Heart left ventricle (tissue), 16 donors: ENCODE measurements at regions of chr18 and their contacts with region 1.

Region 1: DNA sequence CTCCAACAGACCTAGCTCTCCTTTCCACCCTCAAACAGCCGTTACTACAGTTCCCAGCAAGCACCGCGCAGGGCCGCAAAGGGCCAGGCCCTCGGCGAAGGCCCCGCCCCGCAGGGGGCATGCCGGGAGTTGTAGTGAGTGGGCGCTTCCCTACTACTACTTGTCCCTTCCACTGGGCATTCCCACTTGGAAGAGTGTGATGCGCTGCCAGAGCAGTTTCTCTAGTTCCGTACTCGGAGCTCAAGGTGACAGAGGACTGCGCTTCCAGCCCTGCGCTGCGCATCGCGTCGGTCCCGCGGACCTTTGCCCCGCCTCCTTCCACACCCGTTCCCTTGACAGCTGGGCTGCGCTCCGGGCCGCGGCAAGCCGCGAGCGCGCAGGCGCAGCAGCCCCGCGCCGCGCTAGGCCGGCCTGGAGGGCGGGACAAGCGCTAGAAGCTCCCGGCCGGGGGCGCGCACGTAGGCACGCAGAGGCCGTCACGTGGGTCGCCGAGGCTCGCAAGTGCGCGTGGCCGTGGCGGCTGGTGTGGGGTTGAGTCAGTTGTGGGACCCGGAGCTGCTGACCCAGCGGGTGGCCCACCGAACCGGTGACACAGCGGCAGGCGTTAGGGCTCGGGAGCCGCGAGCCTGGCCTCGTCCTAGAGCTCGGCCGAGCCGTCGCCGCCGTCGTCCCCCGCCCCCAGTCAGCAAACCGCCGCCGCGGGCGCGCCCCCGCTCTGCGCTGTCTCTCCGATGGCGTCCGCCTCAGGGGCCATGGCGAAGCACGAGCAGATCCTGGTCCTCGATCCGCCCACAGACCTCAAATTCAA is at the start of gene VAPA:
- DNase-seq: peak; percentile 95 to 98 (median 96)
- ATAC-seq: peak; percentile 95 to 98 (median 96)
- H3K4me3 ChIP-seq: peak within 1 kb of the TSS; percentile 71 to 98 (median 94)
- H3K27ac ChIP-seq: peak within 1 kb of the TSS; percentile 99 to 100 (median 99)
- H3K4me1 ChIP-seq: peaks cover 0 to 41% (median 36%) of the 10 kb centered on the region in 12 donors
- H3K27me3 ChIP-seq: no peaks in the 10 kb centered on the region
- CTCF ChIP-seq: no peak
- POLR2A ChIP-seq: peak in 1 of 2 donors; percentile 87
- total RNA-seq, gene VAPA: 186 to 289 (median 219) TPM

Region 2: GRCh38 chr18:9488538-9488937 is 425.2 kb before region 1 on chr18:
- intact Hi-C with region 1: no loop called
- DNase-seq: no peak
- ATAC-seq: no peak
- H3K4me3 ChIP-seq: no peak overlapping the region
- H3K27ac ChIP-seq: no peak overlapping the region
- H3K4me1 ChIP-seq: peaks cover 0 to 34% (median 0%) of the 10 kb centered on the region in 12 donors
- H3K27me3 ChIP-seq: no peaks in the 10 kb centered on the region
- CTCF ChIP-seq: no peak
- POLR2A ChIP-seq: no peak

Region 3: DNA sequence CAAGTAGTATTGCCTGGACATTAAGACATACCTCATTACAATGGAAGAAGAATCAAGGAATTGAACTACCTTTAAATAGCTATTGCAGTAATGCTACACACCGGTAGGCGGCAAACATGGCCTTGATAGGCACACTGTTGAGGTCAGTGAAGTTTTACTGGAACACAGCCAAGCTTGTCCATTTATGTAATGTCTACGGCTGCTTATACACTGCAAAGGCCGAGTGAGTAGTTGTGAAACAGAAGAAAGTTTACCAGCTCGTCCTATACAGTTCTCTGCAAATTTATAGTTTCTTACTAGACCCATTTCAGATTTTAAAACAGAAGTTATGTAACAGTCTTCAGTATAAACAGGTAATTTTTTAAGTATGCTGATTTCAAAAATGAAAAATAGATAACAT is 338.2 kb before region 1 on chr18:
- intact Hi-C with region 1: loop called in 1 of 10 experiments (anchors 10 kb)
- DNase-seq: peak in 4 of 5 donors; percentile 80 to 88 (median 82)
- ATAC-seq: peak; percentile 96 to 99 (median 98)
- H3K4me3 ChIP-seq: peak overlapping the region in 1 of 12 donors; percentile 6
- H3K27ac ChIP-seq: peak overlapping the region in 7 of 12 donors; percentile 6 to 40 (median 23)
- H3K4me1 ChIP-seq: peaks cover 0 to 9% (median 4%) of the 10 kb centered on the region in 12 donors
- H3K27me3 ChIP-seq: no peaks in the 10 kb centered on the region
- CTCF ChIP-seq: peak; percentile 73 to 95 (median 86)
- POLR2A ChIP-seq: no peak

Region 4: DNA sequence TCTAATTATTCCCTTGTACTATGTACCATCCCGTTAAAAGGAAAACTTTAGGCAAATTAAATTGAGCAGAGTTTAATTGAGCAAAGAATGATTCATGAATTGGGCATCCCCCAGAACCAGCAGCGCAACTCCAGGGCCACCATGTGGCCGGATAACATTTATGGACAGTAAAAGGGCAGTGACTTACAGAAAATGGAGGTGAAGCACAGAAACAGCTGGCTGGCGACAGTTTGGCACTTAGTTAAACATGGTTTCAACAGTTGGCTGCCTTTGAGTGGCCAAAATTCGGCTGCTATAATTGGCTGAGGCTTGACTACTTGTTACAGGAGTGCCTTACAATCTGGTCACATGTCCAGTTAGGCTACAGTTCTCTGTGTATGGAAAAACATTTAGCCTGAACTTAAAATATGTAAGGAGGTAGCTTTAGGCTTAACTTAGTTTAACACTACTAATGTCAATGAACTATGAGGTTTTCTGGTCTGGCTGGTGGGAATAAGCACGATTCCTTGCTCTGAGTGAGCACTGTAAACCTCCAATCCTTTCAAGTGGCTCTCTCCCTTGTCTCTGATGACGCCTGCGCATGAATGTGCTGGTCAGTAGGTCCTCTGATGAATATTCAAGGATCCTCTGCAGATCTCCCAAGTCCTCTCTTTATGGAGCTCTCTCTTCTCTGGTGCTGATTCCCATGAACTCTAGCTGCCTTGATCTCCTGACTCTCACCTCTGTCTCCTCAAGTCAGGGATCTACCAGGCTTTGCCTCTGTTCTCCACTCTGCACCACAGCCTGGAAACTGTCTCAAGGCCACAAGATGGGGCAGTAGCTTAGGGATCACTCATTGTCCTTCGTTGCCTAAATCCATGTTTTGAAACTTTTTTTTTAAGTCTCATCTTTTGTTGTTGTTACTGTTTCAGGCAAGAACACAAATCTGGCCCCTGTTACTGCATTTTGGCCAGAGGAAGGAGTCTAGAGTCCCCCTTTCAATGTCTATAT is 230.0 kb before region 1 on chr18:
- intact Hi-C with region 1: loop called in 2 of 10 experiments (anchors 10 kb)
- DNase-seq: no peak
- ATAC-seq: peak; percentile 50 to 60 (median 54)
- H3K4me3 ChIP-seq: peak overlapping the region in 1 of 12 donors; percentile 13
- H3K27ac ChIP-seq: peak overlapping the region in 8 of 12 donors; percentile 52 to 79 (median 72)
- H3K4me1 ChIP-seq: peaks cover 0 to 26% (median 11%) of the 10 kb centered on the region in 12 donors
- H3K27me3 ChIP-seq: no peaks in the 10 kb centered on the region
- CTCF ChIP-seq: peak in 10 of 12 donors; percentile 12 to 59 (median 40)
- POLR2A ChIP-seq: no peak

Region 5: GRCh38 chr18:9808295-9809241 is 105.2 kb before region 1 on chr18:
- intact Hi-C with region 1: loop called in 3 of 10 experiments (anchors 5 kb)
- DNase-seq: peak in 2 of 5 donors; percentile 50 to 56
- ATAC-seq: peak; percentile 58 to 74 (median 64)
- H3K4me3 ChIP-seq: peak overlapping the region in 2 of 12 donors; percentile 23 to 28
- H3K27ac ChIP-seq: peak overlapping the region; percentile 7 to 76 (median 62)
- H3K4me1 ChIP-seq: peaks cover 0 to 58% (median 33%) of the 10 kb centered on the region in 12 donors
- H3K27me3 ChIP-seq: no peaks in the 10 kb centered on the region
- CTCF ChIP-seq: no peak
- POLR2A ChIP-seq: no peak

Region 6: DNA sequence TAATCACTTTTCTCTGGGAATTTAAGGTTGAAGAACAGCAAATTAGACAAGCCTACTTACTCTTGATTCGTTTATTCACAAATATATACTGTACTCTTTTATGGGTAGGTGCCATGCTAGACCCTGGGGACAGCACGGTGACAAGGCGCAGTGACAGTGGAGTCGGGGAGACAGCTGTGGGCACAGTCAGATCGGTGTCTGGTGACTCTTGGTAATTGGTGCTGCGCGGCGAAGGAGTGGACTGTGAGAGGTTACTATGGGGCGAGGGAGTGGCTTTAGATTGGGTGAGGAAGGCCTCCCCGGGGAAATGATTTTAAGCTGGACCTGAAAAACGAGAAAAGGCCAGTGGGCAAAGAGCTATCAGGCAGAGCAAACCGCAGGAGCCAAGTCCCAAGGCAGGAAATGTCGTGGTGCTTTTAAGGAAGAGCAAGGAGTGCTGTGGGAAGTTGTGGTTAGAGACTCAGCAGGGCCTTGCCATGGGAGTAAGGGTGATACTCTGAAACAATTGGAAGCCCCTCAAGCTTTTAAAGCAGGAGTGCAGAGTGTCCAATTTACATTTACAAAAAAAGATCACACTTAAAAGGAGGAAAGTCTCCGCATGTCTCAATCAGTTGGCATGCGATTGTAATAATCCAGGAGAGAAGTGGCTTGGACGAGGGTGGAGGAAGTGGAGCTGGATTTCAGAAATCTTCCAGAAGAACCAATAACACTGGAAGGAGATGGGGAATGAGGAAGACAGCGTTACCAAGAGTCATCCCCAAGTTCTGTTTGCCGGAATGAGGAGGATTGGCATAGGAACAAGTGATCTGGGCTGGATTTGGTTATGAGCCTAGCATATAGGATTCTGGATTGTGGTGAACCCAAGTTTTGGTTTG is 64.1 kb before region 1 on chr18:
- intact Hi-C with region 1: loop called in 2 of 10 experiments (anchors 5 to 10 kb)
- DNase-seq: peak; percentile 43 to 74 (median 66)
- ATAC-seq: peak; percentile 30 to 88 (median 80)
- H3K4me3 ChIP-seq: no peak overlapping the region
- H3K27ac ChIP-seq: peak overlapping the region; percentile 2 to 73 (median 27)
- H3K4me1 ChIP-seq: peaks cover 0 to 56% (median 15%) of the 10 kb centered on the region in 12 donors
- H3K27me3 ChIP-seq: no peaks in the 10 kb centered on the region
- CTCF ChIP-seq: no peak
- POLR2A ChIP-seq: no peak

Region 7: DNA sequence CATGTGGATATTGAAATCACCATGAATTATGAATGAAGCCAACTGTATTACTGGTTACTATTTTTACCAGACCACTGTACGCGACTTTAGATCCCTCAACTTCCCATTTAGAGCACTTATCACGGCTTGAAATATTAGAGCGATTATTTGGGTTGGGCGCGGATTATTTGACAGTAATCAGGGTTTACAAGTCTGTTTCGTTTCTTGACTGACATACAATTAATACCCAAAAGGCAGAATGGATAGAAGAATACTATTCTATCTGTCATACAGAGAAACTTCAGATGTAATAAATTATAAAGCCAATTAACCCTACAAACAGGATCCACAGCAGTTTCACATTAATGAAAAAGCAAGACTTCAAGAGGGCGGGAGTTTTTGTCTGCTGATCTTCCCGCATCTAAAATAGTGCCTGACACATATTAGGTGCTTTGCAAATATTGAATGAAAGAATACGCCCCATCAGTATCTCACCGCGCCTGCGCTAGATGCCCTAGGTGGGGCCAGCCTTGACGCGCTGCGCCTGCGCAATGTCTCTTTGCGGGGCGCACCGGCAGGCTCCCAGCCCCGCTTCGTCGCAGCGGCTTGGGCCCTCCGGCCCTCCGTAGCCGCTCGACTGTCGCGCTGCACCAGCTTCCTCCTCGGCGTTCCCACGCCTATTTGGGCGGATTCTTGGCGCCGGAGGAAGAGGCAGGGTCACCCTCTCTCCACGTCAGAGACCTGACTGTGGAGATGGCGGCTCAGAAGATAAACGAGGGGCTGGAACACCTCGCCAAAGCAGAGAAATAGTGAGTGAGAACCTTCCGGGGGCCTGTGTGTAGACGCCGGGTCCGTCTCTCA is 611.9 kb after region 1 on chr18 and contains the start of gene NAPG:
- intact Hi-C with region 1: loop called in 1 of 10 experiments (anchors 5 kb)
- DNase-seq: peak; percentile 94 to 96 (median 96)
- ATAC-seq: peak; percentile 84 to 96 (median 94)
- H3K4me3 ChIP-seq: peak within 1 kb of the TSS; percentile 57 to 98 (median 79)
- H3K27ac ChIP-seq: peak within 1 kb of the TSS; percentile 88 to 99 (median 95)
- H3K4me1 ChIP-seq: peaks cover 0 to 47% (median 31%) of the 10 kb centered on the region in 12 donors
- H3K27me3 ChIP-seq: no peaks in the 10 kb centered on the region
- CTCF ChIP-seq: peak in 1 of 12 donors; percentile 16
- POLR2A ChIP-seq: peak in 1 of 2 donors; percentile 62
- total RNA-seq, gene NAPG: 26.7 to 46.3 (median 35.1) TPM